Mammary epithelial cell (primary cell): ENCODE measurements at regions of chr7 and their contacts with region 1.

Region 1: GRCh38 chr7:6260291-6261187 is 11.9 kb downstream of the CYTH3 start:
- DNase-seq: no peak
- H3K4me3 ChIP-seq: no peak overlapping the region
- H3K27ac ChIP-seq: no peak overlapping the region
- H3K4me1 ChIP-seq: no peaks in the 10 kb centered on the region
- H3K27me3 ChIP-seq: no peaks in the 10 kb centered on the region
- CTCF ChIP-seq: no peak

Region 2: GRCh38 chr7:6148724-6149360 is 111.7 kb before region 1 on chr7:
- CTCF ChIA-PET with region 1: no interaction called
- dilution Hi-C with region 1: loop called (anchors 10 kb)
- in situ Hi-C with region 1: no loop called
- intact Hi-C with region 1: no loop called
- DNase-seq: no peak
- H3K4me3 ChIP-seq: no peak overlapping the region
- H3K27ac ChIP-seq: no peak overlapping the region
- H3K4me1 ChIP-seq: no peaks in the 10 kb centered on the region
- H3K27me3 ChIP-seq: no peaks in the 10 kb centered on the region
- CTCF ChIP-seq: no peak

Region 3: GRCh38 chr7:6186593-6186992 is 73.9 kb before region 1 on chr7:
- CTCF ChIA-PET with region 1: no interaction called
- dilution Hi-C with region 1: loop called (anchors 5 kb)
- in situ Hi-C with region 1: no loop called
- intact Hi-C with region 1: no loop called
- DNase-seq: no peak
- H3K4me3 ChIP-seq: no peak overlapping the region
- H3K27ac ChIP-seq: no peak overlapping the region
- H3K4me1 ChIP-seq: no peaks in the 10 kb centered on the region
- H3K27me3 ChIP-seq: no peaks in the 10 kb centered on the region
- CTCF ChIP-seq: no peak

Region 4: GRCh38 chr7:6212008-6212407 is 48.5 kb before region 1 on chr7:
- CTCF ChIA-PET with region 1: no interaction called
- dilution Hi-C with region 1: no loop called
- in situ Hi-C with region 1: no loop called
- intact Hi-C with region 1: no loop called
- DNase-seq: no peak
- H3K4me3 ChIP-seq: no peak overlapping the region
- H3K27ac ChIP-seq: no peak overlapping the region
- H3K4me1 ChIP-seq: no peaks in the 10 kb centered on the region
- H3K27me3 ChIP-seq: no peaks in the 10 kb centered on the region
- CTCF ChIP-seq: no peak

Region 5: GRCh38 chr7:6228361-6229229 is 31.9 kb before region 1 on chr7:
- CTCF ChIA-PET with region 1: no interaction called
- dilution Hi-C with region 1: loop called (anchors 5 kb)
- in situ Hi-C with region 1: no loop called
- intact Hi-C with region 1: no loop called
- DNase-seq: no peak
- H3K4me3 ChIP-seq: no peak overlapping the region
- H3K27ac ChIP-seq: peak overlapping the region; percentile 7
- H3K4me1 ChIP-seq: peaks cover 20% of the 10 kb centered on the region
- H3K27me3 ChIP-seq: no peaks in the 10 kb centered on the region
- CTCF ChIP-seq: no peak

Region 6: DNA sequence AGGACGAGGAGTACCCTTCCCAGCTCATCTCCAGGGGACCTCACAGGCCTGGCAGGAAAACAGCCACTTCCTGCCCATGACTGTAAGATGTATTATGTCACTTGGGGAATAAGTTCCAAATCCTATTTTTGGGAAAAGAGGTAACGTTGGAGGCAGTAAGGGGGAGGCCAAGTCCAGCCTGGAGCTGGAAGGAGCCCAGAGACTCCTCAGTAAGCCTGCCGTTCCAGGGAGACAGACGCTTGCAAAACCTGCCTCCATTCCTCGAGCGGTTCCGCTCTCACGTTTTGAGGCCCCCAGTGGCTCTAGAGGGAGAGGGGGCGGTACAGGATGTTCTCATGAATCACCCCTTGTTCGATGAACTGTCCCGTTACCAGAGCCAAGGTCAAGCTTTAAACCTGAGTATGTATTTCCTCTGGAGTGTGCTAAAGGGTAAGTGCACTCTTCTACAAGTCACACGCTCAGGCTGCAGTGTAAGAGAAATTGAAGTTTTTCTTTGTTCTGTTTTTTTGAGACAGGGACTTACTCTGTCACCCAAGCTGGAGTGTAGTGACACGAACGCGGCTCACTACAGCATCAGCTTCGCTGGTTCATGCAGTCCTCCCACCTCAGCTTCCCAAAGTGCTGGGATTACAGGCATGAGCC is 57.4 kb after region 1 on chr7:
- CTCF ChIA-PET with region 1: no interaction called
- dilution Hi-C with region 1: loop called (anchors 5 kb)
- in situ Hi-C with region 1: no loop called
- intact Hi-C with region 1: no loop called
- DNase-seq: peak; percentile 12
- H3K4me3 ChIP-seq: no peak overlapping the region
- H3K27ac ChIP-seq: no peak overlapping the region
- H3K4me1 ChIP-seq: peaks cover 10% of the 10 kb centered on the region
- H3K27me3 ChIP-seq: no peaks in the 10 kb centered on the region
- CTCF ChIP-seq: no peak